Activated B cell treated with CpG ODN at 0.5 μM for 24 hours (primary cell): ENCODE measurements at regions of chr4 and their contacts with region 1.

Region 1: GRCh38 chr4:143184217-143185116 is at the start of gene USP38:
- DNase-seq: peak; percentile 73
- ATAC-seq: peak; percentile 87
- H3K4me3 Mint-ChIP-seq: peak within 1 kb of the TSS; percentile 93
- H3K27ac Mint-ChIP-seq: peak within 1 kb of the TSS; percentile 94
- H3K4me1 Mint-ChIP-seq: peaks cover 56% of the 10 kb centered on the region
- H3K27me3 Mint-ChIP-seq: no peaks in the 10 kb centered on the region
- CTCF ChIP-seq: no peak
- total RNA-seq, gene USP38: 20.9 and 24.9 TPM in 2 replicates

Region 2: GRCh38 chr4:141220655-141221605 is 1963.5 kb before region 1 on chr4 and contains the start of gene ZNF330:
- CTCF ChIA-PET with region 1: no interaction called
- POLR2A ChIA-PET with region 1: no interaction called
- intact Hi-C with region 1: loop called (anchors 2 kb)
- DNase-seq: peak; percentile 95
- ATAC-seq: peak; percentile 90
- H3K4me3 Mint-ChIP-seq: peak within 1 kb of the TSS; percentile 94
- H3K27ac Mint-ChIP-seq: peak within 1 kb of the TSS; percentile 89
- H3K4me1 Mint-ChIP-seq: peaks cover 28% of the 10 kb centered on the region
- H3K27me3 Mint-ChIP-seq: no peaks in the 10 kb centered on the region
- CTCF ChIP-seq: no peak
- total RNA-seq, gene ZNF330: 40.7 and 41.2 TPM in 2 replicates

Region 3: DNA sequence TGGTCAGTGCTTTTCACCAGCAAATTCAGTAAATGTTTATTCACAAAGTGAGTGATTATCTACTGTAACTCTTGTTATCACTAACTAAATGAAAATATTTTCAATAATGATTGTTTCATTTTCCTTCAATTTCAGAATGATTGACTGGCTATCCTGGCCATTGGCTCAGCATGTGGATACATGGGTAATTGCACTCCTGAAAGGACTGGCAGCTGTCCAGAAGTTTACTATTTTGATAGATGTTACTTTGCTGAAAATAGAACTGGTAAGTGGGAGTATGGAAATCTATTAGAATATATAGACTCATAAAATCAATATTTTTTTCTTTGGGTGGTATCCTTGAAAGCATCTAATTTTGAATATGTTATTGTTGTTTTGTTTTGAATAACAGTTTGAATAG is 11.1 kb after region 1 on chr4:
- CTCF ChIA-PET with region 1: no interaction called
- POLR2A ChIA-PET with region 1: interaction called, 4 read pairs
- intact Hi-C with region 1: loop called (anchors 2 kb)
- DNase-seq: no peak
- ATAC-seq: no peak
- H3K4me3 Mint-ChIP-seq: no peak overlapping the region
- H3K27ac Mint-ChIP-seq: no peak overlapping the region
- H3K4me1 Mint-ChIP-seq: peaks cover 21% of the 10 kb centered on the region
- H3K27me3 Mint-ChIP-seq: no peaks in the 10 kb centered on the region
- CTCF ChIP-seq: no peak

Region 4: DNA sequence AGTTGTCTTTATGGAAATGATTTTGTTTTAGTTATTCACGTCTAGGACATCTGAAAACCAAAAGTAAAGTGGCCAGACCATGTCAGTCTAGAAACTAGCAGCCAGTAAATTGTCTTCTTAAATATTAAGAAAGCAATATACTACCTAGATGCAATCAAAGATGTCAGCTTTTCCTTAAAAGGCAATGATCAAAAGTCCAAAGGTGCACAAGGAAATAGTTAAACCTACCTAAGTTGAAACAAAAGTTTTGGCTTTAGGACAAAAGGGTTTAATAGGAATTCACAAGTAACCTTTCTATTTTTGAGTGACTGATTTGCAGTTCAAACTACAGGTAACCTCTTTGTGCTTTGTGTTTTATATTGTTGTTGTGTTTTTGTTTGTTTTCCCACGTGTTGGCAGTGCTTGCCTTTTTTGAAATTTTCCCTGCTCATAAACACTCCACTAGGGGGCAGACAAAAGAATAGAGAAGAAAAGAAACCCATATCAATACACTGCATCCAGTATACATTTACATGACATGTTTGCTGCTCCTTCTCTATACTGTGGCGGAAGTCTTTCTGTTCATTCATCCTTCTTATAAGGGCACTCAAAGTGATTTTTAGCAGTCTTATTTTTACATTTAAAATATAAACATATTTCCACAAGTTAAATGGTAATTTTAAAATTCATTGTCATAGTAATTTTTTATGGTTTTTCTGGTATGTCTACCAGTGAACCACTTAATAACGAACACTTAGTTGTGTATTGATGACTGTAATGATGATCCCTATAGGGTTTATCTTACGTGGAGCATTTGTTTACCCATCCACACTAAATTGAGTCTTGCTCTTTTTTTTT is 214.9 kb after region 1 on chr4:
- CTCF ChIA-PET with region 1: no interaction called
- POLR2A ChIA-PET with region 1: no interaction called
- intact Hi-C with region 1: loop called (anchors 5 kb)
- DNase-seq: no peak
- ATAC-seq: peak; percentile 56
- H3K4me3 Mint-ChIP-seq: no peak overlapping the region
- H3K27ac Mint-ChIP-seq: no peak overlapping the region
- H3K4me1 Mint-ChIP-seq: peaks cover 30% of the 10 kb centered on the region
- H3K27me3 Mint-ChIP-seq: no peaks in the 10 kb centered on the region
- CTCF ChIP-seq: no peak

Region 5: DNA sequence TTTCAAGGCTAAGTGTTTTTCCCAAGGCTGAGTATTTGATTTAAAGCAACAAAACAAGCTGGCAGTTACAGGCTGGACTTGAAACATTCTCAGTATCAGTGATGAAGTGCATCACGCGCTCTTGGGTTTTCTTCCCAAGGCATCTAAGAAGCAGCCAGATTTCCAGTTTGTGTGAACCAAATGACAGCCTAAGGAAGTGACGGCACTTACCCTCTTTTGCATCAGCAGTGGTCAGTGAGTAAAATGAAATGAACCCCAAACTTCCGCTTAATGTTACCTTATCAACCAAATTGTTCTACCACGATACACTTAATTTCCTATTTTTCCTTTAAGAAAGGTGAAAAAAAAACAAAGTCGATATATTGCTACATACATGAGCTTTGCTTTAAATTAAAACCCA is 736.7 kb after region 1 on chr4:
- CTCF ChIA-PET with region 1: no interaction called
- POLR2A ChIA-PET with region 1: no interaction called
- intact Hi-C with region 1: loop called (anchors 10 kb)
- DNase-seq: no peak
- ATAC-seq: no peak
- H3K4me3 Mint-ChIP-seq: no peak overlapping the region
- H3K27ac Mint-ChIP-seq: peak overlapping the region; percentile 19
- H3K4me1 Mint-ChIP-seq: peaks cover 16% of the 10 kb centered on the region
- H3K27me3 Mint-ChIP-seq: no peaks in the 10 kb centered on the region
- CTCF ChIP-seq: no peak